HEK293 (cell line): ENCODE measurements at regions of chrX and their contacts with region 1.

Region 1: GRCh38 chrX:114611018-114611619 is 27.2 kb downstream of the HTR2C start:
- H3K4me3 ChIP-seq: no peak overlapping the region
- H3K27ac ChIP-seq: no peak overlapping the region
- H3K4me1 ChIP-seq: no peaks in the 10 kb centered on the region
- CTCF ChIP-seq: peak; percentile 26; the same call in 1 of the 2 replicates

Region 2: GRCh38 chrX:114635986-114636385 is 24.9 kb after region 1 on chrX:
- CTCF ChIA-PET with region 1: interaction called, 10 read pairs
- POLR2A ChIA-PET with region 1: no interaction called
- H3K4me3 ChIP-seq: no peak overlapping the region
- H3K27ac ChIP-seq: no peak overlapping the region
- H3K4me1 ChIP-seq: no peaks in the 10 kb centered on the region
- CTCF ChIP-seq: no peak